ENCODE measurements at regions of chr9 and their contacts with region 1.

Region 1: DNA sequence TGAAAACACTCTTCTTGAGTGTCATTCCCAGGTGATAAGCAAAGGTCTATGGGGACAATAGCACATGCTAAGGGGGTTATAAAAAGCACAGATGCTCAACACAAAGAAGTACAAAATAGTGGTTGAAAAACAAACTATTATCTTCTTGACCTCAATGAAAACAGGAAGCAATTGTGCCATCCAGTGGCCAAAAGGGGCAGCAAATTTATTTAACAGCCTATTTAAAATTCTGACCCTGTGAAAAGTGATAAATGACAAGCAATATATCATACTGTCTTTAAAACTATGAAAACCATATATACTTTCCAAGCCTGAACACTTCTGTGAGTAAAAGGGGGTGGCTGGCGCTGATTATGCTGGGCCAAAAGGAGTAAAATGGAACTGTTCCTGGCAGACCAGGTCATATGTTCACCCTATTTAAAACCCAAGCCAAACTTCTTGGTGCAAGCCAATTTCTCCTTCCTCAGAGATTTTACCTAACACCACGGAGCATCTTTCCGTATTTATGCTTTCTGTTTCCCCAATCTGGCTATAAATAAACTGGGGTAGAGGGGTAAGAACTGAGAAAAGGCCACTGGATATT is 29.7 kb downstream of the TEX10 start:
- H3K4me3 Mint-ChIP-seq: no peak overlapping the region
- H3K27ac Mint-ChIP-seq: no peak overlapping the region
- H3K4me1 Mint-ChIP-seq: no peaks in the 10 kb centered on the region
- H3K27me3 Mint-ChIP-seq: no peaks in the 10 kb centered on the region

Region 2: DNA sequence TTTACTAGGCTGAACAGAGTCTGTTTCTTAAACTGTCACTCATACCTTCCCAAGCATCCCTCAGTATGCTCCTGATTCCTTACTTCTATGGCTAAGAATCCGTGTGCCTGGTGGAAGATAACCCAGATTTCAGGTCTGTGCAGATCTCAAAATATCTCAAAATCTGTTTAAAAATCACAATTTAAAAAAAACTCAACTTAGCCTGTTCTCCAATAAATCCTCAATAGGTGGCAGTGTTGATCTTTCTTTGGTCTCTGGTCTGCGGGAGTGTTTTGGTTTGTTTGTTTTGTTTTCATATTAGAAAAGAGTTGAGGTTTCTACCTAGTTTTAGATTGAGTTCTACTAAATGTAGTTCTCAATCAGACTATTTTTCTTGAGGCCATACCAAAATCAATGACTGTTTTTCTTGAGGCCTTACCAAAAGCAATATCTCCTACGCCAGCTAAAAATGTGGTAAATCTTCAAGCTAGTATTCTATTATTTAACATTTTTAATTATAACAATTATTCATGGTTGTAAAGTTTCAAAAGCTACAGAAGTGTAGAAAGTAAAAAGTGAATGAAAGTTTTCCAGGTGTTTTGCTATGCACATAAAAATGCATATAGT is 1160.2 kb before region 1 on chr9:
- intact Hi-C with region 1: loop called (anchors 5 kb)
- H3K4me3 Mint-ChIP-seq: no peak overlapping the region
- H3K27ac Mint-ChIP-seq: no peak overlapping the region
- H3K4me1 Mint-ChIP-seq: peaks cover 5% of the 10 kb centered on the region
- H3K27me3 Mint-ChIP-seq: peaks cover 12% of the 10 kb centered on the region

Region 3: GRCh38 chr9:99266255-99267023 is 1056.6 kb before region 1 on chr9:
- intact Hi-C with region 1: loop called (anchors 2 kb)
- H3K4me3 Mint-ChIP-seq: no peak overlapping the region
- H3K27ac Mint-ChIP-seq: no peak overlapping the region
- H3K4me1 Mint-ChIP-seq: peaks cover 23% of the 10 kb centered on the region
- H3K27me3 Mint-ChIP-seq: peaks cover 2% of the 10 kb centered on the region

Region 4: DNA sequence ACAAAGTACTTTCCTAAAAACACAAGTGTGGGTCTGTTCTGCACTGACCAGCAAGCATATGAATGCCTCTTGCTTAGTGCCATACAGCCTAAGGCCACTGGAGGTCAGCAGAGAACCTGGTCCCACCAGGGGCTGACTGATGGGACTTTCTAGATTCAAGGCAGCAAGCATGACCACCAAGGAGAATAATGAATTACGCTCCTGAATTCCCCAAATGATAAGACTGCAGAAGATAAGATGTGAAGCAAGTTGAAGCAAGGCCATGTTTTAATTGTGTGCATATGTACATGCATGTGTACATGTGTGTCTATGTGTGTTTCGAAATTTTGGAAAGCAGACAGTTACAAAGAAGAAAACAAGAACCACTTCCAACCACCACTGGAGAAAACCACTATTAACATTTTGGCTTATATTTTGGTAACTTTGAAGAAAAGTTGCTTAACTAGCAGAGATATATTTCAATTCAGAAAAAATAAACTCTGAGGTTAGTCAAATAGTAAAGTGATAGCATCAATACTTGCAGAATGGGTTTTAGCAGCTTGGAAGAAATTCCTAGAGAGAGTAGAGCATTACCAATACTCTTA is 294.8 kb before region 1 on chr9:
- intact Hi-C with region 1: loop called (anchors 5 kb)
- H3K4me3 Mint-ChIP-seq: no peak overlapping the region
- H3K27ac Mint-ChIP-seq: peak overlapping the region; percentile 19
- H3K4me1 Mint-ChIP-seq: peaks cover 36% of the 10 kb centered on the region
- H3K27me3 Mint-ChIP-seq: no peaks in the 10 kb centered on the region

Region 5: GRCh38 chr9:100267211-100267610 is 55.8 kb before region 1 on chr9:
- intact Hi-C with region 1: no loop called
- H3K4me3 Mint-ChIP-seq: no peak overlapping the region
- H3K27ac Mint-ChIP-seq: no peak overlapping the region
- H3K4me1 Mint-ChIP-seq: no peaks in the 10 kb centered on the region
- H3K27me3 Mint-ChIP-seq: no peaks in the 10 kb centered on the region

Region 6: DNA sequence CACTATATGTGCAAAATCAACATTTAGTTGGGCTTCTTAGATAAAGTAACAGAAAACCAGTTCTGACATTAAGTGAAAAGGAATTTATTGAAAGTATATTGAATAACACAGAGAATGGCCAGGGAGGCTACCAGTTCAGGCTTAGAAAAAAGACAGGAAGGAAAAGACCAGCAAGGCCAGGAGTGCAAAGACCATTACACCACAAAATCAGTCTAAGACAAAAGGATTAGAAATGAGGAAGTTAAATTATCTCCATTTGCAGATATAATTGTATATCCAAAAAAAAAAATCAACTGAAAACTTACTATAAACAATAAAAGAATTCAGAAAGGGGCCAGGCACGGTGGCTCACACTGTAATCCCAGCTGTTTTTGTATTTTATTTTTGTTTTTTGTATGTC is 34.5 kb after region 1 on chr9:
- intact Hi-C with region 1: no loop called
- H3K4me3 Mint-ChIP-seq: no peak overlapping the region
- H3K27ac Mint-ChIP-seq: no peak overlapping the region
- H3K4me1 Mint-ChIP-seq: peaks cover 13% of the 10 kb centered on the region
- H3K27me3 Mint-ChIP-seq: no peaks in the 10 kb centered on the region

Measured in dendritic cell treated with granulocyte-macrophage colony-stimulating factor and Interleukin-4, amounts not matched to agents 40 ng/mL and 50 ng/mL, for 4 days (primary cell).